Activated CD4-positive, alpha-beta memory T cell treated with anti-CD3 and anti-CD28 coated beads for 36 hours (primary cell): ENCODE measurements at regions of chr19 and their contacts with region 1.

Region 1: GRCh38 chr19:41706741-41707501 is 1.5 kb upstream of the CEACAM5 start:
- DNase-seq: peak; percentile 76
- H3K4me3 Mint-ChIP-seq: peak overlapping the region; percentile 40
- H3K27ac Mint-ChIP-seq: no peak overlapping the region
- H3K4me1 Mint-ChIP-seq: peaks cover 3% of the 10 kb centered on the region
- H3K27me3 Mint-ChIP-seq: peaks cover 37% of the 10 kb centered on the region

Region 2: GRCh38 chr19:41492843-41493242 is 214.1 kb before region 1 on chr19:
- CTCF ChIA-PET with region 1: no interaction called
- POLR2A ChIA-PET with region 1: no interaction called
- intact Hi-C with region 1: no loop called
- DNase-seq: no peak
- H3K4me3 Mint-ChIP-seq: no peak overlapping the region
- H3K27ac Mint-ChIP-seq: no peak overlapping the region
- H3K4me1 Mint-ChIP-seq: no peaks in the 10 kb centered on the region
- H3K27me3 Mint-ChIP-seq: peaks cover 2% of the 10 kb centered on the region

Region 3: DNA sequence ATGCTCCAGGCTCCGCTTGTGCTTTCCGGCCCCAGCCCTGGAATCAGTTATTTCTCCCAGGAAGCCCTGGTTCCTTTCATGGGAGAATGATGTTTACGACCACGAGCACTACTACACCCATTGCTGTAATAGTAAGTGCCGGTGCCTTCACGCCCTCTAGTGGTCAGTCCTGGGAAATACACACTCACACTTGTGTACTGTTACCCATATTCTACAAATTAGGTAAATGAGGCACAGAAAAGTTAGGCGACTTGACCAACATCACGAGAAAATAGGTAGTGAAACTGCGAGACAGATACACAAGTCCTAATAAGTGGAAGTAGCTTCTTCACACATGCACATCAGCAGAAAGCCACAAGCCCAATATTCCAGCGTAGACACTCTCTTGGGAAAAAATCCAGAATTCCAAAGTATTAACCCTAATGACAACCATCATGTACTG is 109.3 kb before region 1 on chr19:
- CTCF ChIA-PET with region 1: no interaction called
- POLR2A ChIA-PET with region 1: no interaction called
- intact Hi-C with region 1: no loop called
- DNase-seq: peak; percentile 80
- H3K4me3 Mint-ChIP-seq: peak overlapping the region; percentile 42
- H3K27ac Mint-ChIP-seq: no peak overlapping the region
- H3K4me1 Mint-ChIP-seq: peaks cover 12% of the 10 kb centered on the region
- H3K27me3 Mint-ChIP-seq: peaks cover 16% of the 10 kb centered on the region

Region 4: DNA sequence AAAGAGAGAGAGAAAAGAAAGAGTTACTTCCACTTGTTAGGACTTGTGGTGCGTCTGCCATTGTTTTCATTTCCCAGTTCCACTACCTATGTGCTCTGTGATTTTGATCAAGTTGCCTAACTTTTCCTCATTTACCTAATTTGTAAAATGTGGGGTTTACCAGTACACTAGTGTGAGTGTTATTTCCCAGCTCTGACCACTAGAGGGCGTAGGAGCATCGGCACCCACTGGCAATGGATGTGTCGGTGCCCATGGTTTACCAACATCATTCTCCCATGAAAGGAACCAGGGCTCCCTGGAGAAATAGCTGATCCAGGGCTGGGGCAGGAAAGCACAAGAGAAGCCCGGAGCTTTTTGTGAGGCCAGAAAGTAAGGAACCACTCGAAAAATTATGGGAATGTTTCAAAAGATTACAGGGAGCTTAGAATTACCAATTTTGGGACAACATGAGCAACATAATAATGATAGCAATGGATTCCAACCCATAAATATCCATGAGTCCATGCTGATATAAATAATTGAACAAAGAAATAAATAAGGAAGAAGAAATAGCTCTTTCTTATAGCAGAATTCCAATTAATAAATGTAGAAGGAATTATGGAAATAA is 64.9 kb before region 1 on chr19:
- CTCF ChIA-PET with region 1: interaction called, 23 read pairs
- POLR2A ChIA-PET with region 1: no interaction called
- intact Hi-C with region 1: no loop called
- DNase-seq: peak; percentile 74
- H3K4me3 Mint-ChIP-seq: no peak overlapping the region
- H3K27ac Mint-ChIP-seq: no peak overlapping the region
- H3K4me1 Mint-ChIP-seq: peaks cover 6% of the 10 kb centered on the region
- H3K27me3 Mint-ChIP-seq: peaks cover 11% of the 10 kb centered on the region

Region 5: GRCh38 chr19:41727746-41728145 is 20.8 kb after region 1 on chr19:
- CTCF ChIA-PET with region 1: interaction called, 30 read pairs
- POLR2A ChIA-PET with region 1: no interaction called
- intact Hi-C with region 1: no loop called
- DNase-seq: no peak
- H3K4me3 Mint-ChIP-seq: no peak overlapping the region
- H3K27ac Mint-ChIP-seq: no peak overlapping the region
- H3K4me1 Mint-ChIP-seq: no peaks in the 10 kb centered on the region
- H3K27me3 Mint-ChIP-seq: peaks cover 35% of the 10 kb centered on the region

Region 6: GRCh38 chr19:41740415-41741243 is 33.7 kb after region 1 on chr19:
- CTCF ChIA-PET with region 1: interaction called, 72 read pairs
- POLR2A ChIA-PET with region 1: no interaction called
- intact Hi-C with region 1: no loop called
- DNase-seq: peak; percentile 34
- H3K4me3 Mint-ChIP-seq: no peak overlapping the region
- H3K27ac Mint-ChIP-seq: peak overlapping the region; percentile 26
- H3K4me1 Mint-ChIP-seq: peaks cover 20% of the 10 kb centered on the region
- H3K27me3 Mint-ChIP-seq: peaks cover 38% of the 10 kb centered on the region

Region 7: DNA sequence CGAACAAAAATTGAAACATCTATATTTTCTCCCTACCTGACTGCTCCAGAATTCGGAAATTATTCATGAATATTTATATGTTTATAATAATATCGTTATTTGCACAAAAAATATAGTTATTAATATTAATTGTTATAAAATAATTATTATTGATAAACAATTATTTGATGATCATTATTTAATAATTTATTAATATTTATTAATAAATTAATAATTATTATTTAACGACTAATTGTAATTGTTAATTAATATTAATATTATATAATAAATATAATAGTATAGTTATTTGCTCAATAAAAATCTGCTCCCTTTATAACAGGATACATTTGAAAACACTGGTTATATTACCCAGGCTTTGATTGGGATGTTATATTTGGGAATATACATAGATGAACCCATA is 62.7 kb after region 1 on chr19:
- CTCF ChIA-PET with region 1: interaction called, 11 read pairs
- POLR2A ChIA-PET with region 1: no interaction called
- intact Hi-C with region 1: no loop called
- DNase-seq: no peak
- H3K4me3 Mint-ChIP-seq: no peak overlapping the region
- H3K27ac Mint-ChIP-seq: no peak overlapping the region
- H3K4me1 Mint-ChIP-seq: peaks cover 23% of the 10 kb centered on the region
- H3K27me3 Mint-ChIP-seq: peaks cover 50% of the 10 kb centered on the region